Motor neuron (in vitro differentiated cells): ENCODE measurements at regions of chr19 and their contacts with region 1.

Region 1: GRCh38 chr19:7293795-7294570 is at the start of gene INSR:
- ATAC-seq: peak; percentile 88 to 93 (median 90)
- H3K4me3 ChIP-seq: peak within 1 kb of the TSS; percentile 74 to 90 (median 79)
- H3K27ac ChIP-seq: peak within 1 kb of the TSS in 1 of 2 donors; percentile 8
- H3K4me1 ChIP-seq: peaks cover 2 to 3% of the 10 kb centered on the region in 2 donors
- total RNA-seq, gene INSR: 6.9 to 19.6 (median 14.1) TPM

Region 2: DNA sequence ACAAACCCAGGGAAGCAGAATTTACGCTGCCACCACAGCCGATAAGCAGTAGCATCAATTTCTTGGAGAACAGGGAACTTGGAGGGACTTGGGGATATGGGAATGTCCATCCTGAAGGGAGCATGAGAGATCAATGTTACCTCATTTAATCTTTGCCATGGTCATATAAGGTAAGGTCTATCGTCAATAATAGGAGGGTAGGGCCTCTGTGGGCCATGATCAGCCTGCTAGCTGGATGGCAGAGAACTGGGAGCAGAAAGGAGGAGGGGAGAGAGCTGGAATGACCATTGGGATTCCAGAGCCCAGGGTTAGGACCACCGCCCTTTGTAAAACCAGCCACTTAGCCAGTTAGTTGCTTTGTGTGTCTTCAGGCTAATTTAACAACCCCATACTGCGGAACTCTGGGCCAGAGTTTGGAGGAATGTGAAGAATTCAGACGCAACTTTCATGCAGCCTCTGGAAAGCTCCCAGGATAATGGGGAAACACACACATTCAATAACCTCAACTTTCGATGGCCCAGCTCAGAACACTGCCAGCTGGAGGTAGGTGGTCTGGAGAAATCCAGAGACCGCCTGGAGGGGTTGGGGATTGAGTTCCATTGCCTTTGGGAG is 184.2 kb before region 1 on chr19:
- in situ Hi-C with region 1: no loop called
- ATAC-seq: peak in 1 of 8 experiments; percentile 39
- H3K4me3 ChIP-seq: no peak overlapping the region
- H3K27ac ChIP-seq: no peak overlapping the region
- H3K4me1 ChIP-seq: no peaks in the 10 kb centered on the region

Region 3: DNA sequence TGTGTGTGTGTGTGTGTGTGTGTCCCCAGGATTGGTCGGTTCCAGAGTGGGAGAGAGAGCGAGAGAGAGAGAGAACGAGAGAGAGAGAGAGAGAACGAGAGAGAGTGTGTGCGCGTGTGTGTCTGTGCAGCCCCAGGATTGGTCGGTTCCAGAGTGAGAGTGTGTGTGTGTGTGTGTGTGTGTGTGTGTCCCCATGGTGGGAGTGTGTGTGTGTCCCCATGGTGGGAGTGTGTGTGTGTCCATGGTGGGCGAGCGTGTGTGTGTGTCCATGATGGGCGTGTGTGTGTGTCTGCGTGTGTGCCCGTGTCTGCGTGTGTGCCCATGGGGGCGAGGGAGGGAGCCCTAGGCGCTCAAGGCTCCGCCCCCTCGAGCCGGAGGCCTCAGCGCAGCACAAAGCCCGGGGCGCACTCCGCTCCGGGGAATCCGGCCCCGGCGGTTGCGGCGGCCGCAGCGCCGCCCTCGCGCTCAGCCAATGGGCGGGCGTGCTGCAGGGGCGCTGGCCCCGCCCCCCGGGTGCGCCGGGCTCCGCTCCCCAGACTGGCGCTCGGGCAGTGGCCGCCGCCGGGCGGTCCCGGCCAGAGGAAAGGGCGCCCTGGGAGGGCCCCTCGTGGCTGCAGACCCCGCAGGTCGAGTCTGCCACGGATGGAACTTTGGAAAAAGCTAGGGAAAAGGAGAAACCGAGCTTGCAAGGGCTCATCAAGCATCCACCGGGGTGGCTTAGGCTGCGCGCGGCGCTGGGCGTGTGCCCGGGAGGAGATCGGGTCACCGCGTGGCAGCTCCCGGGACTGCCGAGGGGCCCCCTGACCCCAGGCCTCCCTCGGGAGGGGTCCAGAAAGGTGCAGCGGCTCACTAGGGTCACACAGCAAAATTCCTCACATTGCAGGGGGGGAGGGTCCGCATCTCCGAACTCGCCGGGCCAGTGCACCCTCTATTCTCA is 96.0 kb before region 1 on chr19:
- in situ Hi-C with region 1: loop called in 5 of 9 experiments (anchors 10 to 25 kb)
- ATAC-seq: peak; percentile 79 to 90 (median 86)
- H3K4me3 ChIP-seq: peak overlapping the region; percentile 46 to 91 (median 76)
- H3K27ac ChIP-seq: peak overlapping the region in 1 of 2 donors; percentile 42
- H3K4me1 ChIP-seq: peaks cover 0 to 3% of the 10 kb centered on the region in 2 donors